ENCODE measurements at regions of chr7 and their contacts with region 1.

Region 1: DNA sequence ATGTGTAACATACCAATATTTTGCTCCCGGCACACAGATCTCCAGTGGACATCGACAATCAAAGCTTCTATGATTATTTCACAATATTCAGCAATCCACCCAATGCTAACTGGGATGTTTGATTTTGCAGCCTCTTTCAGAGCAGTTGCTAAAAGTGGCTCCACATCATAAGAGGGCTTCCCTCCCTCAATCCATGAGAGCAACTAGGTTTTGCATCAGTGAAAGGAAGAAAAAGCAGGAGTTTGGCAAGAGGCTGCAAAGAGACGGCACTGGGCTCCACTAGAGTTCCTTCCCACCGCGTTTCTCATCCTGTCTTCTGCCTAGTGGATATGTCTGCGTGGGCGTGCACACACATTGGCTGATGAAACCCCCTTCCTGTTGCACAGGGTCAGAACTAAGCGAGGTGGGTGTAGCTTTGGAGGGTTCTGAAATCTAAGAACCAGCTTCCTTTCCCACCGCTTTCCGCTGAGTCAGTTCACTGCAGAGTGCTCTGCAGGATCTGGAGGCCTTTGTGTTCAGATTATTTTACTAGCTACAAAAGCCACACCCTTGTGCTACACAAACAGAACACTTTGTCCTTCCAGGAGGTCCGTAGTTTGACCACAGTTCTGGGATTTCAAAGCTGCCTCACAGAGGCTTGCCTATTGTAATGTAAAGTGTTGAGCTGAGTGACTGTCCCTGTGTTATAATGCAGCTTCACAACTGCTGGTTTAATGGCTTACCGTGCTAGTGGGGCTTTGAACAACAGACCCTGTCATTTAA is 28.1 kb downstream of the ARL4A start:
- DNase-seq: peak; percentile 44
- H3K4me3 Mint-ChIP-seq: no peak overlapping the region
- H3K27ac Mint-ChIP-seq: no peak overlapping the region
- H3K4me1 Mint-ChIP-seq: peaks cover 23% of the 10 kb centered on the region
- H3K27me3 Mint-ChIP-seq: no peaks in the 10 kb centered on the region

Region 2: DNA sequence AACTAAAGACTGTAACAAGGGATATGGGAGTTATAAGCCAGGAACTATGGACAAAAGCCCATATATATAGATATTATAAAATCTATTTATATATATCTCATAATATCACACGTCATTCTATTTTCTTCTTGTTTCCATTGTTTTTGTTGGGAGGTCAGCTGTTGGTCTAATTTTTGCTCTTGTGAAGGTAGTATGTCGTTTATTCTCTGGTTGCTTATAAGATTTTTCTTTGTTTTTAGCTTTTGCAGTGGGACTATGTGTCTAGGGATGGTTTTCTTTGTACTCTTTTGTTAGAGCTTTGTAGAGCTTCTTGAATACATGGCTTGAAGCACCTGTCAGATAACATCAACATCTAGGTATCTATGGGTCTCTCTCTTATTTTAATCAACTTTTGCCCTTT is 14.1 kb before region 1 on chr7:
- CTCF ChIA-PET with region 1: no interaction called
- intact Hi-C with region 1: loop called (anchors 1 kb)
- DNase-seq: no peak
- H3K4me3 Mint-ChIP-seq: no peak overlapping the region
- H3K27ac Mint-ChIP-seq: no peak overlapping the region
- H3K4me1 Mint-ChIP-seq: no peaks in the 10 kb centered on the region
- H3K27me3 Mint-ChIP-seq: no peaks in the 10 kb centered on the region